K562 (cell line): ENCODE measurements at regions of chr1 and their contacts with region 1.

Region 1: DNA sequence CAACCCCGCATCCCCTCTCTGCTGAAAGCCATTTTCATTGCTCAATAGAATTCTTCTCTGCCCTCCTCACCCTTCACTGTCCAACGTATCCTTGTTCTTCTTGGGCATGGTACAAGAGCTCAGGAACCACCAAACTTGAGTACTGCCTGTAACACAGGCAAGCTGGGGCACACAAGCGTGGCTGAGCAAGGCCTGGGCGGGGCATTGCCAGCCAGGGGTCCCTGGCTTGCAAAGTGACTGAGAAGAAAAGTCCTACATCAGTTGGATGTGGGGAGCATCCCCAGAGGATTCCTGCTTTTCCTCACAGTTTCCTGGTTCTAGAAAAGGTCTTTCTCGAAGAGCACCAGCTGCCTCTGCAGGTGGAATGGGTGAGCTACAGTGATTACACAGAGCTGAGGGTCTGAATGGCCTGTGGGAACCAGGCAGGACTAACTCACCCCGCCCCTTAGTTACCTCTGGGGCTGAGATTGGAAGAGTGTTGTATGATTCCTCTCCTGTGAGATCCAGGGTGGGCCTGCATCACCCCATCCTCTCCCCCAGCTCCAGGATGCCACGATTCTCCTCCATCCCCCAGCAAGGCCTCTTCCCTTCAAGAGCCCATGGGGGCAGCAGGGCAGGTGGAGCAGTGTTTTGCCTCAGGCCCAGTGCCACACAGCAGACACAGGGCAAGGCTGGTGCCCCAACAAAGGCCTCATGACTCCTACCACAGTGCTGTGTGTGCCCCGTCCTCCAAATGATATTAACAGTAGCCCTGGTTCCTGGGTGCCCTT is 121.9 kb downstream of the MATN1 start:
- DNase-seq: no peak
- ATAC-seq: 0 out of 3 replicates have a peak, but pooled peaks have one; percentile 23
- H3K4me3 ChIP-seq: no peak overlapping the region
- H3K27ac ChIP-seq: no peak overlapping the region
- H3K4me1 ChIP-seq: 0 out of 5 replicates have a peak, but pooled peaks cover 0 to 4% of the 10 kb centered on the region in 2 experiments
- H3K27me3 ChIP-seq: peaks cover 0 to 25% of the 10 kb centered on the region in 2 experiments; a peak in 2 of 5 replicates
- CTCF ChIP-seq: peak in 2 of 3 experiments; percentile 17 to 19; a peak in 2 of 6 replicates
- EP300 ChIP-seq: no peak
- POLR2A ChIP-seq: no peak
- RAD21 ChIP-seq: 0 out of 4 replicates have a peak, but pooled peaks of 1 of the 2 experiments have one; percentile 7

Region 2: GRCh38 chr1:30476911-30477459 is 124.5 kb before region 1 on chr1:
- CTCF ChIA-PET with region 1: no interaction called
- POLR2A ChIA-PET with region 1: no interaction called
- in situ Hi-C with region 1: no loop called
- intact Hi-C with region 1: no loop called
- DNase-seq: no peak
- ATAC-seq: peak; percentile 65; the same call in 2 of the 3 replicates
- H3K4me3 ChIP-seq: no peak overlapping the region
- H3K27ac ChIP-seq: no peak overlapping the region
- H3K4me1 ChIP-seq: no peaks in the 10 kb centered on the region
- H3K27me3 ChIP-seq: peaks cover 7 to 40% of the 10 kb centered on the region in 2 experiments; a peak in 4 of 5 replicates
- CTCF ChIP-seq: no peak
- EP300 ChIP-seq: no peak
- POLR2A ChIP-seq: no peak
- RAD21 ChIP-seq: no peak

Region 3: DNA sequence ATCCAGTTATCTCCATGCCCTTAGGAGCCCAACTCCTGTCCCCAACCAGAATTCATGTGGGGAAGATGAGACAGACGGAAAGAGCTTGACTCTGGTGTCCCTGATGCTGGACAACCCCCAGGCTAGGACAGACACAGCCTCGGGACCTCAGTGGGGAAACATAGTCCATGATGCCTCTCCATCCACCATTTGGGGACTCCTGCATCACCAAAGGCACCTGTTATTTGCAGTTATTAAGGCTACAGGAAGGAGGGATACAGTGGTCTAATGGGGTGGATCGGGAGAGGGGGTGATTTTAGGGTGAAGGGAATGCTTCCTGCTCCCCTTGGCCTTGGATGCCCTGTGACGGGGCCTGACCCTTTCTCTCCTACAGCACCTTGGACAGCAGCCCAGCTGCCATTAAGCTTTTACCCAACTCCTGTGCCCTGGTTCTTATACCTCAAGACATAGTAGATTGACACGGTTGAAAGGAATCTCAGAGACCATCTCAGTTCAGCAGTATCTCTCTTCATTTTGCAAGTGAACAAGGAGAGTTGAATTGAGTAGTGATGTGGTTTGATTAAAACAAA is 10.3 kb after region 1 on chr1:
- CTCF ChIA-PET with region 1: no interaction called
- POLR2A ChIA-PET with region 1: interaction called, 11 read pairs
- in situ Hi-C with region 1: no loop called
- intact Hi-C with region 1: no loop called
- DNase-seq: no peak
- ATAC-seq: no peak
- H3K4me3 ChIP-seq: no peak overlapping the region
- H3K27ac ChIP-seq: no peak overlapping the region
- H3K4me1 ChIP-seq: no peaks in the 10 kb centered on the region
- H3K27me3 ChIP-seq: peaks cover 0 to 12% of the 10 kb centered on the region in 2 experiments; a peak in 1 of 5 replicates
- CTCF ChIP-seq: no peak
- EP300 ChIP-seq: no peak
- POLR2A ChIP-seq: no peak
- RAD21 ChIP-seq: no peak

Region 4: GRCh38 chr1:31027693-31028526 is 426.4 kb after region 1 on chr1:
- CTCF ChIA-PET with region 1: no interaction called
- POLR2A ChIA-PET with region 1: no interaction called
- in situ Hi-C with region 1: no loop called
- intact Hi-C with region 1: no loop called
- DNase-seq: peak in 2 of 4 experiments; percentile 60 to 73
- ATAC-seq: peak; percentile 62
- H3K4me3 ChIP-seq: no peak overlapping the region
- H3K27ac ChIP-seq: peak overlapping the region; percentile 51; the same call in 2 of the 3 replicates
- H3K4me1 ChIP-seq: peaks cover 8 to 33% of the 10 kb centered on the region in 2 experiments; a peak in 4 of 5 replicates
- H3K27me3 ChIP-seq: no peaks in the 10 kb centered on the region
- CTCF ChIP-seq: no peak
- EP300 ChIP-seq: no peak
- POLR2A ChIP-seq: no peak
- RAD21 ChIP-seq: no peak